H1 (cell line): ENCODE measurements at regions of chr11 and their contacts with region 1.

Region 1: DNA sequence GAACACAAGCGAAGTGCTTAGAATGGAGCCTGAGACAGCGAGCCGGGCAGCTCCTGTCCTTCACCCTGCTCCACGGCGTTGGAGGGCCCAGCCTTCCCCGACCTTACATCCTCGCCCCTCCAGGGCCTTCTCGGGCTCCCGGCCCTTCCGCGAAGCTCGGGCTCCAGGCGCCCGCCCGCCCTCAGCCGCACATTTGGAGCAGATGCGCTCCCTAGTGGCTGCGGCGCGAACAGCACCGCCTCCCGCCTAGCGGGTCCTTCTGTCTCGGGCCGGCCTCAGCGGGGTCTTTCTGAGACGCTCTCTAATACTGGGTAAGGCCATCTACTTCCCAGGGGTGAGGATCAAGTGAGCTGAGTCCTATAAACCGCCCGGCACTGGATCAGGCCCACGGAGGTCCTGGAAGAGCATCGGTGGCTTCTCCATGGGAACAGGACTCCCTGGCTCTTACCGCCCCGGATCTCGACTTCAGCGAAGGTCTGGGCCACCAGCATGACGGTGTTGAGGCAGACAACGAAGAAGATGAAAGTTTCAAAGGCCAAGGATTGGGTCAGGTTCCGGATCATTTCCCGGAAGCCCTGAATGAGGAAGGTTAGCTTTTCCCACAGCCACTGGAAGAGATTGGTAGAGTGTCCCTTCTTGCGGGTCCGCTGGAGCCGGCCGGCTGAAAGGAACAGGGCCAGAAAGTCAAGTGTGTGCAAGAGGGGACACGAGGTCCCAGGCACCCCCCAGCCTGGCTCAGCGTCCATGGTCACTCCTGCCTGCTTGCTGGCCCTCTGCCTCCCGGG is 3.7 kb downstream of the CATSPER1 start:
- DNase-seq: peak; percentile 49 to 99
- H3K4me3 ChIP-seq: peak overlapping the region in 1 of 4 experiments; percentile 10; a peak in 1 of 8 replicates
- H3K27ac ChIP-seq: no peak overlapping the region
- H3K4me1 ChIP-seq: peaks cover 0 to 3% (median 1%) of the 10 kb centered on the region in 4 experiments; a peak in 1 of 7 replicates
- H3K27me3 ChIP-seq: peaks cover 0 to 18% (median 5%) of the 10 kb centered on the region in 4 experiments; a peak in 4 of 7 replicates
- CTCF ChIP-seq: peak; percentile 86 to 96 (median 86)
- EP300 ChIP-seq: peak in 1 of 2 experiments; percentile 60; a peak in 1 of 3 replicates
- POLR2A ChIP-seq: no peak
- RAD21 ChIP-seq: peak; percentile 70 to 82

Region 2: GRCh38 chr11:65652511-65653231 is 369.9 kb before region 1 on chr11:
- CTCF ChIA-PET with region 1: no interaction called
- POLR2A ChIA-PET with region 1: no interaction called
- DNase-seq: peak in 1 of 2 experiments; percentile 93
- H3K4me3 ChIP-seq: peak overlapping the region; percentile 45 to 72 (median 60)
- H3K27ac ChIP-seq: peak overlapping the region; percentile 77
- H3K4me1 ChIP-seq: peaks cover 0 to 12% (median 8%) of the 10 kb centered on the region in 4 experiments; a peak in 5 of 7 replicates
- H3K27me3 ChIP-seq: peaks cover 0 to 4% (median 2%) of the 10 kb centered on the region in 4 experiments; a peak in 1 of 7 replicates
- CTCF ChIP-seq: no peak
- EP300 ChIP-seq: no peak
- POLR2A ChIP-seq: peak in 1 of 2 experiments; percentile 65; a peak in 2 of 3 replicates
- RAD21 ChIP-seq: no peak

Region 3: DNA sequence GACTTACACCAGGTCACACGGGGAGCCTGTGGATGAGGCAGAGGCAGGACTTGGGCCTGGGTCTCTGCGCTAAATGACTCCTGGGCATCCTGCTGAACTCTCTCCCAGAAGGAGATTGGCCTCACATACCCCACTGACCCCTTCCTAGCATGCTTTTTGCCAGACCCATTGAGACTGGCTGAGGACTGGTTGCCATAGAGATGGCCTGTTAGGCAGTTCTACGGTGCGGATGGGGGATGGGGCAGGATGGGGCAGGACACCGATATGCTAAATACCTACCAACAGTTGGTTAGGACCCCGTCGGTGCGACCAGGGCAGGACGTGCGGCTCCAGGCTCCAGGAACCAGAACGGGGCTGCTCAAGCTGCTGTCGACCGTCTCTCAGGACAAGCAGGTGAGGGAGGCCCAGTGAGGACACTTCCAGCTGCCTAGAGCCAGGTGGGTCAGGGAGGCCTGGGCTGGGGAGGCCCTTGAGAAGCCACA is 77.1 kb before region 1 on chr11 and contains the start of gene TSGA10IP:
- CTCF ChIA-PET with region 1: no interaction called
- POLR2A ChIA-PET with region 1: no interaction called
- DNase-seq: peak; percentile 33 to 73
- H3K4me3 ChIP-seq: peak within 1 kb of the TSS; percentile 3 to 54 (median 30); a peak in 7 of 8 replicates
- H3K27ac ChIP-seq: peak within 1 kb of the TSS; percentile 80
- H3K4me1 ChIP-seq: peaks cover 3 to 25% (median 15%) of the 10 kb centered on the region in 4 experiments
- H3K27me3 ChIP-seq: no peaks in the 10 kb centered on the region
- CTCF ChIP-seq: no peak
- EP300 ChIP-seq: peak in 1 of 2 experiments; percentile 81; a peak in 1 of 3 replicates
- POLR2A ChIP-seq: peak; percentile 28 to 59; a peak in 2 of 3 replicates
- RAD21 ChIP-seq: peak in 1 of 2 experiments; percentile 5; a peak in 1 of 4 replicates
- total RNA-seq, gene TSGA10IP: 1.3 and 1.9 TPM in 2 replicates

Region 4: GRCh38 chr11:65981972-65982823 is 40.4 kb before region 1 on chr11:
- CTCF ChIA-PET with region 1: no interaction called
- POLR2A ChIA-PET with region 1: no interaction called
- DNase-seq: no peak
- H3K4me3 ChIP-seq: no peak overlapping the region
- H3K27ac ChIP-seq: no peak overlapping the region
- H3K4me1 ChIP-seq: no peaks in the 10 kb centered on the region
- H3K27me3 ChIP-seq: no peaks in the 10 kb centered on the region
- CTCF ChIP-seq: no peak
- EP300 ChIP-seq: no peak
- POLR2A ChIP-seq: no peak
- RAD21 ChIP-seq: 0 out of 4 replicates have a peak, but pooled peaks of 1 of the 2 experiments have one; percentile 1

Region 5: DNA sequence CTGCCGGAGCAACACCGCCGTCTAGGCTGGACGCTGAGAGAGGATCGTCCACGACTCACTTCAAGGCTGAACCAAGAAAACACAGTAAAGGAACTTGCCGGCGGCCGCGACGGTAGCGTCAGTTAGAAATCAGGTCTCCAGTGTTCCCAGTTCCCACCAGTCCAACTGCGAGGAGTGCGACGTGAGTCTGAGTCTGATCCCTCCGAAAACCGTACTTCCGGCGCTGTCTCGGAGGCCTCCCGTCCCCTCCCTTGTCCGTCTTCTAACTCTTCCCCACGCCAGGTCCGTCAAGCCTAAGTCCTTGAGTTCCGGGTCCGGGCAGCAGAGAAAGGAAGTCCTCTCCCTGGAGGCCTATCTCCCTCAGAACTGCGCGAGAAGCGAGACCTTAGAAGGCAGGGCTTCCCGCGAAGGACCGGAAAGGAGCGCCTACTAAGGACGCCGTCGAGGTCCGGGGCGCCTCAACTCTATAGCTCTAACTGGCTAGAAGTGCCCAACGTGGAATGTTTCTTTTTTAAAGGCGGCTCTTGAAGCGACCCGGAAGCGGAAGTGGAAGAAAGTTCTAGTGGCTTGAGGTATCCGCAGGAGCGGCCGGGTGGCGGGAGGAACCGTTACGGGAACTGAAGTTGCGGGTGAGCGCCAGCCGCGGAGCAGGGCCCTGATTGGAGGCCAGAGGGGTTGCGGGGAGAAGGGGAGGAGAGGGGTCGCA is 20.5 kb before region 1 on chr11 and contains the starts of genes BANF1 and EIF1AD:
- CTCF ChIA-PET with region 1: interaction called, 12 read pairs
- POLR2A ChIA-PET with region 1: interaction called, 6 read pairs
- DNase-seq: peak; percentile 81 to 94
- H3K4me3 ChIP-seq: peak within 1 kb of the TSS; percentile 67 to 99 (median 94)
- H3K27ac ChIP-seq: peak within 1 kb of the TSS; percentile 87
- H3K4me1 ChIP-seq: peaks cover 0 to 10% (median 5%) of the 10 kb centered on the region in 4 experiments; a peak in 5 of 7 replicates
- H3K27me3 ChIP-seq: no peaks in the 10 kb centered on the region
- CTCF ChIP-seq: 0 out of 4 replicates have a peak, but pooled peaks of 1 of the 3 experiments have one; percentile 2
- EP300 ChIP-seq: peak in 1 of 2 experiments; percentile 71; a peak in 1 of 3 replicates
- POLR2A ChIP-seq: peak in 1 of 2 experiments; percentile 80; a peak in 2 of 3 replicates
- RAD21 ChIP-seq: 0 out of 4 replicates have a peak, but pooled peaks of 1 of the 2 experiments have one; percentile 0
- total RNA-seq, gene BANF1: 330 and 345 TPM in 2 replicates
- total RNA-seq, gene EIF1AD: 35.8 and 39.9 TPM in 2 replicates

Region 6: GRCh38 chr11:66011239-66011784 is 11.3 kb before region 1 on chr11:
- CTCF ChIA-PET with region 1: interaction called, 35 read pairs
- POLR2A ChIA-PET with region 1: interaction called, 5 read pairs
- DNase-seq: no peak
- H3K4me3 ChIP-seq: peak overlapping the region; percentile 2 to 54 (median 36); a peak in 6 of 8 replicates
- H3K27ac ChIP-seq: no peak overlapping the region
- H3K4me1 ChIP-seq: peaks cover 0 to 20% (median 9%) of the 10 kb centered on the region in 4 experiments; a peak in 5 of 7 replicates
- H3K27me3 ChIP-seq: peaks cover 6 to 26% (median 24%) of the 10 kb centered on the region in 4 experiments
- CTCF ChIP-seq: no peak
- EP300 ChIP-seq: no peak
- POLR2A ChIP-seq: no peak
- RAD21 ChIP-seq: no peak

Region 7: GRCh38 chr11:66035653-66036333 is 13.2 kb after region 1 on chr11:
- CTCF ChIA-PET with region 1: interaction called, 39 read pairs
- POLR2A ChIA-PET with region 1: interaction called, 3 read pairs
- DNase-seq: no peak
- H3K4me3 ChIP-seq: no peak overlapping the region
- H3K27ac ChIP-seq: no peak overlapping the region
- H3K4me1 ChIP-seq: no peaks in the 10 kb centered on the region
- H3K27me3 ChIP-seq: no peaks in the 10 kb centered on the region
- CTCF ChIP-seq: no peak
- EP300 ChIP-seq: no peak
- POLR2A ChIP-seq: no peak
- RAD21 ChIP-seq: no peak

Region 8: GRCh38 chr11:66045177-66045639 is 22.6 kb after region 1 on chr11:
- CTCF ChIA-PET with region 1: interaction called, 34 read pairs
- POLR2A ChIA-PET with region 1: interaction called, 3 read pairs
- DNase-seq: peak; percentile 67 to 95
- H3K4me3 ChIP-seq: no peak overlapping the region
- H3K27ac ChIP-seq: no peak overlapping the region
- H3K4me1 ChIP-seq: peaks cover 0 to 21% (median 14%) of the 10 kb centered on the region in 4 experiments; a peak in 6 of 7 replicates
- H3K27me3 ChIP-seq: no peaks in the 10 kb centered on the region
- CTCF ChIP-seq: peak; percentile 95 to 97 (median 96)
- EP300 ChIP-seq: no peak
- POLR2A ChIP-seq: no peak
- RAD21 ChIP-seq: peak; percentile 44 to 63